ENCODE measurements at regions of chr12 and their contacts with region 1.

Region 1: GRCh38 chr12:11015775-11016430 is 6.5 kb downstream of the TAS2R19 start:
- DNase-seq: no peak
- H3K4me3 ChIP-seq: no peak overlapping the region
- H3K27ac ChIP-seq: no peak overlapping the region
- H3K4me1 ChIP-seq: no peaks in the 10 kb centered on the region
- H3K27me3 ChIP-seq: no peaks in the 10 kb centered on the region
- CTCF ChIP-seq: no peak
- EP300 ChIP-seq: no peak
- POLR2A ChIP-seq: no peak

Region 2: DNA sequence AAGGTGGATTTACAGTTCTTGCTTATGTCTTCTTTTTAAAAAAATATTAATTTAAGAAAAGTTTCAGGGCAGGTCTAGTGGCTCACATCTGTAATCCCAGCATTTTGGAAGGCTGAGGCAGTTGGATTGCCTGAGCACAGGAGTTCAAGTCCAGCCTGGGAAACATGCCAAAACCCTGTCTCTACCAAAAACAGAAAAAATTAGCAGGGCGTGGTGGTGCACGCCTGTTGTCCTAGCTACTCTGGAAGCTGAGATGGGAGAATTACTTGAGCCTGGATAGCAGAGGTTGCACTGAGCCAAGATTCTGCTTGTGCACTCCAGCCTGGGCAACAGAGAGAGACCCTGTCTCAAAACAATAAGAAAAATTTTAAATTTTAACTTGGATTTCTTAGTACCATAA is 51.6 kb after region 1 on chr12:
- intact Hi-C with region 1: loop called (anchors 5 kb)
- DNase-seq: no peak
- H3K4me3 ChIP-seq: no peak overlapping the region
- H3K27ac ChIP-seq: no peak overlapping the region
- H3K4me1 ChIP-seq: peaks cover 0 to 8% (median 6%) of the 10 kb centered on the region in 4 donors
- H3K27me3 ChIP-seq: no peaks in the 10 kb centered on the region
- CTCF ChIP-seq: no peak
- EP300 ChIP-seq: no peak
- POLR2A ChIP-seq: no peak

Region 3: DNA sequence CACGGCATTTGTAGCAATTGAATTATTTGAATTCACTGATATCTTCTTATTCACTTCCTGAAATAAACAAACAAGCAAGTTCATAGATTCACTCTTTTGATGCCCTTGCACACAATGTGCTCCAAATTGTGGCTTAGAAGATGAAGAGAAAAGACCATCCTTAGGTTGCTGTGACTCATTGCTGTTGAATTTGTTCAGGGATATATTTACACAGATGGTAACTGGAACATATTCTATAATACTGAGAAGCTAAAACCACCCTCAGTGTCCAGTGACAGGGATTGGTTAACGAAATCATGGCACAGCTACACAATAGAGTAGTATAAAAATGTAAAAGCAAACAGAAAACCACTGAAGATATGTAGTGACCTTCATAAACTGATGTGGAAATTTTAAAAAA is 291.2 kb after region 1 on chr12:
- intact Hi-C with region 1: no loop called
- DNase-seq: no peak
- H3K4me3 ChIP-seq: no peak overlapping the region
- H3K27ac ChIP-seq: no peak overlapping the region
- H3K4me1 ChIP-seq: no peaks in the 10 kb centered on the region
- H3K27me3 ChIP-seq: no peaks in the 10 kb centered on the region
- CTCF ChIP-seq: no peak
- EP300 ChIP-seq: no peak
- POLR2A ChIP-seq: no peak